ENCODE measurements at regions of chr18 and their contacts with region 1.

Region 1: GRCh38 chr18:63326011-63326410 is 6.4 kb upstream of the BCL2 start:
- DNase-seq: no peak
- H3K4me3 Mint-ChIP-seq: no peak overlapping the region
- H3K27ac Mint-ChIP-seq: no peak overlapping the region
- H3K4me1 Mint-ChIP-seq: peaks cover 17% of the 10 kb centered on the region
- H3K27me3 Mint-ChIP-seq: no peaks in the 10 kb centered on the region

Region 2: GRCh38 chr18:63016270-63016669 is 309.7 kb before region 1 on chr18:
- CTCF ChIA-PET with region 1: interaction called, 14 read pairs
- POLR2A ChIA-PET with region 1: interaction called, 19 read pairs
- DNase-seq: peak; percentile 64
- H3K4me3 Mint-ChIP-seq: no peak overlapping the region
- H3K27ac Mint-ChIP-seq: no peak overlapping the region
- H3K4me1 Mint-ChIP-seq: no peaks in the 10 kb centered on the region
- H3K27me3 Mint-ChIP-seq: peaks cover 41% of the 10 kb centered on the region

Region 3: GRCh38 chr18:63237881-63238667 is 87.9 kb before region 1 on chr18:
- CTCF ChIA-PET with region 1: no interaction called
- POLR2A ChIA-PET with region 1: no interaction called
- DNase-seq: no peak
- H3K4me3 Mint-ChIP-seq: no peak overlapping the region
- H3K27ac Mint-ChIP-seq: no peak overlapping the region
- H3K4me1 Mint-ChIP-seq: peaks cover 69% of the 10 kb centered on the region
- H3K27me3 Mint-ChIP-seq: no peaks in the 10 kb centered on the region